IMR-90 (cell line): ENCODE measurements at regions of chr3 and their contacts with region 1.

Region 1: GRCh38 chr3:58324391-58325390 is 8.0 kb upstream of the PXK start:
- DNase-seq: peak; percentile 10
- ATAC-seq: peak; percentile 13
- H3K4me3 ChIP-seq: no peak overlapping the region
- H3K27ac ChIP-seq: peak overlapping the region; percentile 34; the same call in 1 of the 2 replicates
- H3K4me1 ChIP-seq: peaks cover 13% of the 10 kb centered on the region
- H3K27me3 ChIP-seq: no peaks in the 10 kb centered on the region
- CTCF ChIP-seq: no peak
- POLR2A ChIP-seq: no peak
- RAD21 ChIP-seq: no peak

Region 2: GRCh38 chr3:58349792-58350626 is 25.3 kb after region 1 on chr3:
- CTCF ChIA-PET with region 1: no interaction called
- POLR2A ChIA-PET with region 1: no interaction called
- dilution Hi-C with region 1: no loop called
- in situ Hi-C with region 1: no loop called
- intact Hi-C with region 1: loop called (anchors 1 kb)
- DNase-seq: no peak
- ATAC-seq: peak; percentile 7; the same call in 1 of the 2 replicates
- H3K4me3 ChIP-seq: no peak overlapping the region
- H3K27ac ChIP-seq: peak overlapping the region; percentile 4; the same call in 1 of the 2 replicates
- H3K4me1 ChIP-seq: peaks cover 11% of the 10 kb centered on the region
- H3K27me3 ChIP-seq: no peaks in the 10 kb centered on the region
- CTCF ChIP-seq: no peak
- POLR2A ChIP-seq: no peak
- RAD21 ChIP-seq: no peak